IMR-90 (cell line): ENCODE measurements at regions of chr2 and their contacts with region 1.

Region 1: DNA sequence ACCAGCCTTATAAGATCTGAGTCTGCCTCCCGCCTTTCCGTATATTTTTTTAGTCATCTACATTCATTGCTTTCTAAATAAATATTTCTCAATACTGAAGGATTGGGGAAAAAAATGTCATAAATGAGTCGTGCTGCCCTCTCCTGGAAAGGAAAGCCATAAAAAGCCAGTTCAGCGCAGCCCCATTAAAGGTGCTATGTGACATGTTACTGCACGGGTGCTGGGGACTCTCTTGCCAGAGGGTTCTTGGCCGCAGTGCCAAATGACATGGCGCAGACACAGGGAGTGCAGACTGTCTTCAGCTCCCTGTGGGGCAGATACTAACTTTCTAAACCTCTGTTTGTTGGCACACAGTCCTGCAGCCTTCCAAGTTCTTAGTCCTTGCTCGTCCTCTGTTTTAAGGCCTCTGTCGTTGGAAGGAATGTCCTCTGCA is 53.7 kb upstream of the MAP3K20 start:
- DNase-seq: peak; percentile 60
- ATAC-seq: peak; percentile 87
- H3K4me3 ChIP-seq: no peak overlapping the region
- H3K27ac ChIP-seq: no peak overlapping the region
- H3K4me1 ChIP-seq: no peaks in the 10 kb centered on the region
- H3K27me3 ChIP-seq: no peaks in the 10 kb centered on the region
- CTCF ChIP-seq: peak; percentile 66
- POLR2A ChIP-seq: no peak
- RAD21 ChIP-seq: peak; percentile 63

Region 2: GRCh38 chr2:172743143-172743542 is 278.8 kb before region 1 on chr2:
- CTCF ChIA-PET with region 1: no interaction called
- POLR2A ChIA-PET with region 1: no interaction called
- dilution Hi-C with region 1: no loop called
- in situ Hi-C with region 1: no loop called
- intact Hi-C with region 1: no loop called
- DNase-seq: no peak
- ATAC-seq: no peak
- H3K4me3 ChIP-seq: no peak overlapping the region
- H3K27ac ChIP-seq: no peak overlapping the region
- H3K4me1 ChIP-seq: no peaks in the 10 kb centered on the region
- H3K27me3 ChIP-seq: no peaks in the 10 kb centered on the region
- CTCF ChIP-seq: no peak
- POLR2A ChIP-seq: no peak
- RAD21 ChIP-seq: no peak

Region 3: DNA sequence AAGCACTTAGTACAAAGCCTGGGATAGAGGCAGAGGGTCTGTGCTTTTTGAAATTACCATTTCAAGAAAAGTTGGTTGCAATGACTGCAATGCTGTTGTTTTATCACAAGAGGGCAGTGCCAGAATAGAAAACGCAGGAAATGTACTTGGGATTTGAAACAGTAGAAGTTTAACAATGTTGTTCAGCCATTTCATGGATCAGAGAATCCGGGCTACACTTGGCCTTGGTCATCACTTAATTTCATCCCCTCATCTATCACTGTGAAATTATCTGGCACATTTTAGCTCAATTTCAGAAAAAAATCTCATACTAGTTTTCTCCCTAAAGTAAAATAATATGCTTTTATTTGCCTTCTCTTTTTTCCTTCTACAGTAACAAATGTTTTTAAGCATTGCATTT is 215.5 kb before region 1 on chr2:
- CTCF ChIA-PET with region 1: no interaction called
- POLR2A ChIA-PET with region 1: no interaction called
- dilution Hi-C with region 1: no loop called
- in situ Hi-C with region 1: loop called (anchors 5 kb)
- intact Hi-C with region 1: loop called (anchors 1 kb)
- DNase-seq: peak; percentile 68
- ATAC-seq: peak; percentile 85
- H3K4me3 ChIP-seq: no peak overlapping the region
- H3K27ac ChIP-seq: no peak overlapping the region
- H3K4me1 ChIP-seq: no peaks in the 10 kb centered on the region
- H3K27me3 ChIP-seq: no peaks in the 10 kb centered on the region
- CTCF ChIP-seq: peak; percentile 92
- POLR2A ChIP-seq: peak; percentile 53; the same call in 1 of the 2 replicates
- RAD21 ChIP-seq: peak; percentile 96

Region 4: GRCh38 chr2:172813314-172813888 is 208.6 kb before region 1 on chr2:
- CTCF ChIA-PET with region 1: interaction called, 3 read pairs
- POLR2A ChIA-PET with region 1: no interaction called
- dilution Hi-C with region 1: no loop called
- in situ Hi-C with region 1: loop called (anchors 5 kb)
- intact Hi-C with region 1: no loop called
- DNase-seq: peak; percentile 50
- ATAC-seq: peak; percentile 72
- H3K4me3 ChIP-seq: no peak overlapping the region
- H3K27ac ChIP-seq: no peak overlapping the region
- H3K4me1 ChIP-seq: no peaks in the 10 kb centered on the region
- H3K27me3 ChIP-seq: no peaks in the 10 kb centered on the region
- CTCF ChIP-seq: peak; percentile 66
- POLR2A ChIP-seq: no peak
- RAD21 ChIP-seq: peak; percentile 71

Region 5: DNA sequence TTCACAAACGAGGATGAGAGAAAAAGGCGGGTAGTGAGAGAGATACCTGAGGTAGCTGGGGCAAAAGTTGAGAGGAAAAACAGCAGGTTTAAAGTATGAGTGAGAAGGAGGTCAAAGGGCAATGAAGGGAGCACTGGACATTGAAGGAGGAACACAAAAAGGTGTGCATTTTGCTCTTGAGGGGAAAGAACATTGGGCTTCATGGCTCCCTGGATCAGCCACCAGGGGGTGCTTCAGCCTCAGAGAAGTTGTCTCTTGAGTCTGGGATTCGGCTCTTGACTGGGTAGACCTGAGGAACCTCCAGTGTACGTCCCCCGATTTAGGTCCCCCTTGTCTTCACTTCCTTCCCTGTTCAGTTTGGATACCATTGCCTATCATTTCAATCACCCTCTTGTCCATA is 157.8 kb before region 1 on chr2:
- CTCF ChIA-PET with region 1: no interaction called
- POLR2A ChIA-PET with region 1: no interaction called
- dilution Hi-C with region 1: no loop called
- in situ Hi-C with region 1: no loop called
- intact Hi-C with region 1: loop called (anchors 1 kb)
- DNase-seq: peak; percentile 51
- ATAC-seq: peak; percentile 73; the same call in 1 of the 2 replicates
- H3K4me3 ChIP-seq: no peak overlapping the region
- H3K27ac ChIP-seq: no peak overlapping the region
- H3K4me1 ChIP-seq: peaks cover 4% of the 10 kb centered on the region
- H3K27me3 ChIP-seq: no peaks in the 10 kb centered on the region
- CTCF ChIP-seq: peak; percentile 65
- POLR2A ChIP-seq: no peak
- RAD21 ChIP-seq: peak; percentile 76

Region 6: GRCh38 chr2:172931918-172932520 is 89.9 kb before region 1 on chr2:
- CTCF ChIA-PET with region 1: interaction called, 3 read pairs
- POLR2A ChIA-PET with region 1: no interaction called
- dilution Hi-C with region 1: no loop called
- in situ Hi-C with region 1: no loop called
- intact Hi-C with region 1: loop called (anchors 5 kb)
- DNase-seq: peak; percentile 78
- ATAC-seq: peak; percentile 45; the same call in 1 of the 2 replicates
- H3K4me3 ChIP-seq: no peak overlapping the region
- H3K27ac ChIP-seq: no peak overlapping the region
- H3K4me1 ChIP-seq: peaks cover 7% of the 10 kb centered on the region
- H3K27me3 ChIP-seq: no peaks in the 10 kb centered on the region
- CTCF ChIP-seq: peak; percentile 83
- POLR2A ChIP-seq: no peak
- RAD21 ChIP-seq: peak; percentile 77

Region 7: GRCh38 chr2:172972005-172972619 is 49.8 kb before region 1 on chr2:
- CTCF ChIA-PET with region 1: interaction called, 3 read pairs
- POLR2A ChIA-PET with region 1: no interaction called
- dilution Hi-C with region 1: no loop called
- in situ Hi-C with region 1: no loop called
- intact Hi-C with region 1: loop called (anchors 2 kb)
- DNase-seq: peak; percentile 48
- ATAC-seq: peak; percentile 73
- H3K4me3 ChIP-seq: no peak overlapping the region
- H3K27ac ChIP-seq: no peak overlapping the region
- H3K4me1 ChIP-seq: peaks cover 10% of the 10 kb centered on the region
- H3K27me3 ChIP-seq: no peaks in the 10 kb centered on the region
- CTCF ChIP-seq: peak; percentile 71
- POLR2A ChIP-seq: no peak
- RAD21 ChIP-seq: peak; percentile 64

Region 8: GRCh38 chr2:173151671-173152398 is 129.9 kb after region 1 on chr2:
- CTCF ChIA-PET with region 1: no interaction called
- POLR2A ChIA-PET with region 1: no interaction called
- dilution Hi-C with region 1: no loop called
- in situ Hi-C with region 1: no loop called
- intact Hi-C with region 1: no loop called
- DNase-seq: peak; percentile 90
- ATAC-seq: peak; percentile 66
- H3K4me3 ChIP-seq: no peak overlapping the region
- H3K27ac ChIP-seq: no peak overlapping the region
- H3K4me1 ChIP-seq: peaks cover 25% of the 10 kb centered on the region
- H3K27me3 ChIP-seq: no peaks in the 10 kb centered on the region
- CTCF ChIP-seq: no peak
- POLR2A ChIP-seq: no peak
- RAD21 ChIP-seq: no peak

Region 9: GRCh38 chr2:173249661-173250641 is 228.0 kb after region 1 on chr2:
- CTCF ChIA-PET with region 1: no interaction called
- POLR2A ChIA-PET with region 1: no interaction called
- dilution Hi-C with region 1: no loop called
- in situ Hi-C with region 1: no loop called
- intact Hi-C with region 1: no loop called
- DNase-seq: no peak
- ATAC-seq: no peak
- H3K4me3 ChIP-seq: no peak overlapping the region
- H3K27ac ChIP-seq: no peak overlapping the region
- H3K4me1 ChIP-seq: no peaks in the 10 kb centered on the region; the same call in 1 of the 2 replicates
- H3K27me3 ChIP-seq: no peaks in the 10 kb centered on the region
- CTCF ChIP-seq: no peak
- POLR2A ChIP-seq: no peak
- RAD21 ChIP-seq: no peak